ENCODE measurements at regions of chr4 and their contacts with region 1.

Region 1: DNA sequence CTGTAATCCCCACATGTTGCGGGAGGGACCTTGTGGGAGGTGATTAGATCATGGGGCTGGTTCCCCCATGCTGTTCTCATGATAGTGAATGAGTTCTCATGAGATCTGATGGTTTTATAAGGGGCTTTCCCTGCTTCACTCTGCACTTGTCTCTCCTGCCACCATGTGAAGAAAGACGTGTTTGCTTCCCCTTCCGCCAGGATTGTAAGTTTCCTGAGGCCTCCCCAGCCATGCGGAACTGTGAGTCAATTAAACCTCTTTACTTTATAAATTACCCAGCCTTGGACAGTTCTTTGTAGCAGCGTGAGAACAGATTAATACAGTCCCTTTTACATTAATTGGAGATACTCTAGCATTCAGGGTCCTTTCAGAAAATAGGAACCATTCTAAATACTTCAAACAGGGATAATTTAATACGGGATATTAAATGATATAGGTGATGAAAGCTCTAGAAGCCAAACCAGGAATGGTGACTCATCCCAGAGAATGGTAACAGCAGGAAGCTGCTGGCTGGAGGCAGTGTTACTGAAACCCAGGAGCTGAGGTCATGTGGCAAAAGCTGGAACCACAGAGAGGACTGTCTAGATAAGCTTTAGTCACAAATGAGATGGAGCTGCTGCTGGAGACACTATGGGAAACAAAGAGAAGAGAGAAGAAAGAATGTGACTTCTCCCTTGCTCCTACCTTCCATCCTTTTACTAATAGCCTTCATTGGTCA is 57.3 kb downstream of the GSTCD start:
- DNase-seq: no peak
- H3K4me3 ChIP-seq: no peak overlapping the region
- H3K4me3 Mint-ChIP-seq: no peak overlapping the region
- H3K27ac Mint-ChIP-seq: no peak overlapping the region
- H3K4me1 ChIP-seq: no peaks in the 10 kb centered on the region
- H3K4me1 Mint-ChIP-seq: no peaks in the 10 kb centered on the region
- H3K27me3 ChIP-seq: no peaks in the 10 kb centered on the region
- H3K27me3 Mint-ChIP-seq: no peaks in the 10 kb centered on the region
- CTCF ChIP-seq: no peak

Region 2: DNA sequence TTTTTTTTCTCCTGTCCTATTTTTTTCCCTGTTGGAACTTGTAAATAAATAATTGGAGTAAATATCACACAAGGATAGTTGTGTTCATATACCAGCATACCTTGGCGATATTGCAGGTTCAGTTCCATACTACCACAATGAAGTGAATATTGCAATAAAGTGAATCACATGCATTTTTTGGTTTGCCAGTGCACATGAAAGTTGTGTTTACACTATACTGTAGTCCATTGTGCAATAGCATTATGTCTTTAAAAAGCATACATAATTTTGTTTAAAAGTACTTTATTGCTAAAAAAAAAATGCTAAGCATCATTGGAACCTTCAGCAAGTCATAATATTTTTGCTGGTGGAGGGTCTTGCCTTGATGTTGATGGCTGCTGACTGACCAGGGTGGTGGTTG is 31.4 kb after region 1 on chr4:
- CTCF ChIA-PET with region 1: no interaction called
- POLR2A ChIA-PET with region 1: no interaction called
- intact Hi-C with region 1: loop called (anchors 1 kb)
- DNase-seq: no peak
- H3K4me3 ChIP-seq: no peak overlapping the region
- H3K4me3 Mint-ChIP-seq: no peak overlapping the region
- H3K27ac Mint-ChIP-seq: no peak overlapping the region
- H3K4me1 ChIP-seq: no peaks in the 10 kb centered on the region
- H3K4me1 Mint-ChIP-seq: no peaks in the 10 kb centered on the region
- H3K27me3 ChIP-seq: no peaks in the 10 kb centered on the region
- H3K27me3 Mint-ChIP-seq: no peaks in the 10 kb centered on the region
- CTCF ChIP-seq: no peak